ENCODE measurements at regions of chr7 and their contacts with region 1.

Region 1: GRCh38 chr7:135662373-135663114 is at the start of gene STMP1:
- DNase-seq: peak; percentile 97
- H3K4me3 Mint-ChIP-seq: peak within 1 kb of the TSS; percentile 95
- H3K27ac Mint-ChIP-seq: peak within 1 kb of the TSS; percentile 96
- H3K4me1 Mint-ChIP-seq: peaks cover 41% of the 10 kb centered on the region
- H3K27me3 Mint-ChIP-seq: no peaks in the 10 kb centered on the region
- total RNA-seq, gene STMP1: 17.3 to 17.8 TPM

Region 2: GRCh38 chr7:135147899-135148721 is 514.4 kb before region 1 on chr7 and contains the start of gene TMEM140:
- CTCF ChIA-PET with region 1: interaction called, 3 read pairs
- POLR2A ChIA-PET with region 1: no interaction called
- intact Hi-C with region 1: loop called (anchors 5 kb)
- DNase-seq: peak; percentile 73
- H3K4me3 Mint-ChIP-seq: peak within 1 kb of the TSS; percentile 83
- H3K27ac Mint-ChIP-seq: peak within 1 kb of the TSS; percentile 95
- H3K4me1 Mint-ChIP-seq: peaks cover 60% of the 10 kb centered on the region
- H3K27me3 Mint-ChIP-seq: no peaks in the 10 kb centered on the region
- total RNA-seq, gene TMEM140: 8.6 to 10.0 TPM

Region 3: DNA sequence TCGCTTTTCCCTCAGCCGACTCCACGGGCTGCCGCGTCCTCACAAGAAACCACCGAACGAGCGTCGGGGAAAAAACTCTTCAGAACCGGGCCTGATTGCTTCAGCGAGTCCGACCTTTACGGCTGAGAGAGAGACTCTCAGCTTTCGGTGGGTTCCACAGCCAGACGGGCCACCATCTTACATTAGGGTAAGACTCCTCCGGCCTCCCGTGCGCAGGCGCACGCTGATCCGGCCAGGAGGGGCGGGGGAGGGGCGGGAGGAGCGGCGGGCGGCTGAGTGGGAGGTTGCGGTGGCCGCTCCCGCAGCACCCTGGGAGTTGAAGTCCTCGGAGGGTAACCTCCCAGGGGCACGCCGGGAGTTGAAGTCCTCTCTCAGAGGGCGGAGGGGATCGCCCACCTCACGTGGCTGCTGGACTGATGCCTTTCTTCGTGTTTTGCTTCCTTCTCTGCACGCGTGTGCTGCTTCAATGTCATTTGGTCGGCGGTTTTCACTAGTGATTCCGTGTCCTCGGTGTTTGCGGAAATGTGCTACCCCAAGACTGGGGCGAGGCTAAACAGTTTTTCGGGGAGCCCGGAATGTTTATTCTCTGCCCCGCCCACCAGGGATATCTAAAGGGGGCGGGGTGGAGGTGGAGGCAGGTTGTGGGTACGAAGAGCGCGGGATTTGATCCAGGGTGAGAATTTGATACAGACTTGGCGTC is 152.5 kb before region 1 on chr7 and contains the start of gene CNOT4:
- CTCF ChIA-PET with region 1: no interaction called
- POLR2A ChIA-PET with region 1: no interaction called
- intact Hi-C with region 1: loop called (anchors 1 kb)
- DNase-seq: peak; percentile 98
- H3K4me3 Mint-ChIP-seq: no peak within 1 kb of the TSS
- H3K27ac Mint-ChIP-seq: no peak within 1 kb of the TSS
- H3K4me1 Mint-ChIP-seq: peaks cover 9% of the 10 kb centered on the region
- H3K27me3 Mint-ChIP-seq: no peaks in the 10 kb centered on the region
- total RNA-seq, gene CNOT4: 16.1 to 17.4 TPM

Region 4: DNA sequence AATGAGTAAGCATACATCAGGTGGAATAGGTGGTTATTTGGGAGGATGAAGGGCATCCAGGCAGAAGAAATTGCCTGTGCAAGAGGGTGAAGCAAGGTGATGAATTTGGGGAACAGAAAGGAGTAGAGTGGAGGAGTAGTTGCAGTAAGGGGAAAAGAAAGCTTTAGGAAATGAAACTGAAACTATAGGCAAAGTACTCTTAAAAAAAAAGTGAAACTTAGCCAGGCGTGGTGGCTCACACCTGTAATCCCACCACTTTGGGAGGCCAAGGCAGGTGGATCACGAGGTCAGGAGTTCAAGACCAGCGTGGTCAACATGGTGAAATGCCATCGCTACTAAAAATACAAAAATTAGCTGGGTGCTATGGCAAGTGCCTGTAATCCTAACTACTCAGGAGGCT is 87.2 kb before region 1 on chr7:
- CTCF ChIA-PET with region 1: no interaction called
- POLR2A ChIA-PET with region 1: no interaction called
- intact Hi-C with region 1: no loop called
- DNase-seq: no peak
- H3K4me3 Mint-ChIP-seq: no peak overlapping the region
- H3K27ac Mint-ChIP-seq: peak overlapping the region; percentile 61
- H3K4me1 Mint-ChIP-seq: peaks cover 9% of the 10 kb centered on the region
- H3K27me3 Mint-ChIP-seq: no peaks in the 10 kb centered on the region

Region 5: DNA sequence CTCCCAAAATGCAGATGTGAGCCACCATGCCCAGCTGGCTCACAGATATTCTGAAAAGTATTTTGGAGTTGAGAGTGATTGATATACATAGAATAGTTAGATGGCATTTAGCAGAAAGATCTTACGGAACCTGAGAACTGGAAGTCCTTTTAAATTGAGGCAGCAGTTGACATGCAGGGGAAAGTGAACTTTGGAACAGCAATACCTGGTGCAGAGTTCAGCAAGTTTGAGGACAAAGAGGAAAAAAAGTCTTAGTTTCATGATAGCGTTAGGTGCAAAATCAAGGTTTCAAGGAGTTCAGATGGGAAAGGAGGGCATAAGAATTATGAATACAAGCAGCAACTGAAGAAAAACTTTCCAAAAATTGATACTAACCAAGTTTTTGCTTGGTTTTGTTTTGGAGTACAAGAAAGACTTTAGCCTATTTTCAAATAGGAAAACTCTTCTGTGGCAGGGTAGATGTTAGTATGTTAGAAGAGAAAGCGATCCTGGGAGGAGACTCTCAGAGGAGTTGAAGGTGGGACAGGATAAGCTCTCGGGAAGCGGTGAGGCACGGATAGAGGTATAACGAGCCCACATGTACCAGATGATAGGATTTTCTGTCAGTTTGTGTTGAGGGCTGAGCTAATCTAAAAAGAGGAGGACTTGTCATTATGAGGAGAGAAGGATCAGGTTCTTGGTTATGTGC is 28.2 kb before region 1 on chr7:
- CTCF ChIA-PET with region 1: no interaction called
- POLR2A ChIA-PET with region 1: no interaction called
- intact Hi-C with region 1: no loop called
- DNase-seq: no peak
- H3K4me3 Mint-ChIP-seq: no peak overlapping the region
- H3K27ac Mint-ChIP-seq: no peak overlapping the region
- H3K4me1 Mint-ChIP-seq: no peaks in the 10 kb centered on the region
- H3K27me3 Mint-ChIP-seq: no peaks in the 10 kb centered on the region

Region 6: DNA sequence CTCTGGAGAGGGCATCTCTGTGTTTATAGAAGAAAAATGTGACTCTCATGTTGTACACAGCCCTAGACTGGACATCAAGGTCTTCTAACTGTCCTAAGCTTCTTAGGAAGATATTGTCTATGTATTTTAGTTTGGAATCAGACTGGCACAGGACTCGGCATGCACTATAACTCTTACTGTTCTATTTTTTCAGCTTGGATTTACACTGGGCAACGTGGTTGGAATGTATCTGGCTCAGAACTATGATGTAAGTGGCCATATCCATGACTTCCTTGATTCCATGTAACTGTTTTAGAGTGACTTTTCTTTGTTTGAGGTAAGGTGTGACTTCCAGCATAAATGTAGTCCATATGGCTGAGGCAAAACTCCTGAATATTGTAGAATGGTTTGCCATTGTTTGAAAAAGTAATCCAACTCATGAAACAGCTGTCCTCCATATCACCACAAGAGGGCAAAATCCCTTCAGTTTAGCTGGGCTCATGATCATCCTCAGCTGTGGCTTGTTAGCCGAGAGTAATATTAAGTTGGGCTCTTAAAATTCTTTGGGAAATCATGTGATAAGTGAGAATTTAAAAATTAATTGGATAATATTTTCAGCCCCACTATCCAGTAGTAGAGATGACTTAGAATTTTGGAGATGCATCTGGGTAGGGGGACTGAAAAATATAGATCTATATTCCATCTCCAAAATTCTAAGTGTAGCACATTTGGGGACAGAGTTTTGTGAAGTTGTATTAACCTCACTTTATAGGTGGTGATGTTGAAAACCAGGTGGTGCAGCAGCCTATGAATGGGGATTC is 10.2 kb after region 1 on chr7:
- CTCF ChIA-PET with region 1: interaction called, 17 read pairs
- POLR2A ChIA-PET with region 1: no interaction called
- intact Hi-C with region 1: no loop called
- DNase-seq: no peak
- H3K4me3 Mint-ChIP-seq: no peak overlapping the region
- H3K27ac Mint-ChIP-seq: no peak overlapping the region
- H3K4me1 Mint-ChIP-seq: peaks cover 25% of the 10 kb centered on the region
- H3K27me3 Mint-ChIP-seq: no peaks in the 10 kb centered on the region

Region 7: DNA sequence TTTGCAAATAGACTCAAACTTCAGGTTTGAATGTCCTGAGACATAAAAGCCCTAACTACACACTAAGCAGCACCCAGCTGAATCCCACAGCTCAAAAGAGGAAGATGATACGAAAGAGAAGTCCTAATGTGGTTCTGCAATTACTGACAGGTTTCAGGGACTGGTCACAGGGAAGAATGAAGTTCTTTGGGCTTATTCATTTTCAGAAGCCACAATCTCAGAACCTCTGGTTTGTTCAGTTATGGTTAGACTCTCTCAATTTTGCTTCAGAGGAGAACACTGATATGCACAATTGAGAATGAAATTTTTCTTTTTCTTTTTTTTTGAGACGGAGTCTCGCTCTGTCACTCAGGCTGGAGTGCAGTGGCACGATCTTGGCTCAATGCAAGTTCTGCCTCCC is 180.7 kb after region 1 on chr7:
- CTCF ChIA-PET with region 1: no interaction called
- POLR2A ChIA-PET with region 1: no interaction called
- intact Hi-C with region 1: loop called (anchors 1 kb)
- DNase-seq: peak; percentile 17
- H3K4me3 Mint-ChIP-seq: no peak overlapping the region
- H3K27ac Mint-ChIP-seq: no peak overlapping the region
- H3K4me1 Mint-ChIP-seq: peaks cover 9% of the 10 kb centered on the region
- H3K27me3 Mint-ChIP-seq: peaks cover 3% of the 10 kb centered on the region

Region 8: GRCh38 chr7:136064081-136064480 is 401.5 kb after region 1 on chr7:
- CTCF ChIA-PET with region 1: no interaction called
- POLR2A ChIA-PET with region 1: no interaction called
- intact Hi-C with region 1: loop called (anchors 1 kb)
- DNase-seq: peak; percentile 41
- H3K4me3 Mint-ChIP-seq: no peak overlapping the region
- H3K27ac Mint-ChIP-seq: peak overlapping the region; percentile 77
- H3K4me1 Mint-ChIP-seq: peaks cover 29% of the 10 kb centered on the region
- H3K27me3 Mint-ChIP-seq: no peaks in the 10 kb centered on the region

Measured in activated CD4-positive, alpha-beta memory T cell treated with anti-CD3 and anti-CD28 coated beads for 36 hours (primary cell).